ENCODE measurements at regions of chr15 and their contacts with region 1.

Region 1: GRCh38 chr15:65638681-65639089 is 16.9 kb downstream of the SLC24A1 start:
- DNase-seq: peak; percentile 84 to 96
- ATAC-seq: peak; percentile 74 to 87
- H3K4me3 ChIP-seq: no peak overlapping the region
- H3K27ac ChIP-seq: no peak overlapping the region
- H3K4me1 ChIP-seq: peaks cover 17% of the 10 kb centered on the region
- CTCF ChIP-seq: peak; percentile 97
- EP300 ChIP-seq: no peak
- POLR2A ChIP-seq: no peak
- RAD21 ChIP-seq: peak; percentile 88 to 96

Region 2: GRCh38 chr15:65426216-65426853 is 212.3 kb before region 1 on chr15:
- CTCF ChIA-PET with region 1: no interaction called
- POLR2A ChIA-PET with region 1: no interaction called
- DNase-seq: no peak
- ATAC-seq: no peak
- H3K4me3 ChIP-seq: no peak overlapping the region
- H3K27ac ChIP-seq: no peak overlapping the region
- H3K4me1 ChIP-seq: peaks cover 11% of the 10 kb centered on the region; the same call in 2 of the 3 replicates
- CTCF ChIP-seq: no peak
- EP300 ChIP-seq: no peak
- POLR2A ChIP-seq: no peak
- RAD21 ChIP-seq: no peak

Region 3: GRCh38 chr15:65620833-65621232 is 17.9 kb before region 1 on chr15:
- CTCF ChIA-PET with region 1: interaction called, 106 read pairs
- POLR2A ChIA-PET with region 1: no interaction called
- DNase-seq: no peak
- ATAC-seq: peak; percentile 33 to 57; a peak in 2 of 6 replicates
- H3K4me3 ChIP-seq: no peak overlapping the region
- H3K27ac ChIP-seq: no peak overlapping the region
- H3K4me1 ChIP-seq: no peaks in the 10 kb centered on the region
- CTCF ChIP-seq: no peak
- EP300 ChIP-seq: no peak
- POLR2A ChIP-seq: no peak
- RAD21 ChIP-seq: 0 out of 5 replicates have a peak, but pooled peaks of 1 of the 2 experiments have one; percentile 13

Region 4: GRCh38 chr15:65682404-65682911 is 43.8 kb after region 1 on chr15:
- CTCF ChIA-PET with region 1: interaction called, 15 read pairs
- POLR2A ChIA-PET with region 1: no interaction called
- DNase-seq: no peak
- ATAC-seq: no peak
- H3K4me3 ChIP-seq: no peak overlapping the region
- H3K27ac ChIP-seq: no peak overlapping the region
- H3K4me1 ChIP-seq: no peaks in the 10 kb centered on the region
- CTCF ChIP-seq: no peak
- EP300 ChIP-seq: no peak
- POLR2A ChIP-seq: no peak
- RAD21 ChIP-seq: no peak

Region 5: DNA sequence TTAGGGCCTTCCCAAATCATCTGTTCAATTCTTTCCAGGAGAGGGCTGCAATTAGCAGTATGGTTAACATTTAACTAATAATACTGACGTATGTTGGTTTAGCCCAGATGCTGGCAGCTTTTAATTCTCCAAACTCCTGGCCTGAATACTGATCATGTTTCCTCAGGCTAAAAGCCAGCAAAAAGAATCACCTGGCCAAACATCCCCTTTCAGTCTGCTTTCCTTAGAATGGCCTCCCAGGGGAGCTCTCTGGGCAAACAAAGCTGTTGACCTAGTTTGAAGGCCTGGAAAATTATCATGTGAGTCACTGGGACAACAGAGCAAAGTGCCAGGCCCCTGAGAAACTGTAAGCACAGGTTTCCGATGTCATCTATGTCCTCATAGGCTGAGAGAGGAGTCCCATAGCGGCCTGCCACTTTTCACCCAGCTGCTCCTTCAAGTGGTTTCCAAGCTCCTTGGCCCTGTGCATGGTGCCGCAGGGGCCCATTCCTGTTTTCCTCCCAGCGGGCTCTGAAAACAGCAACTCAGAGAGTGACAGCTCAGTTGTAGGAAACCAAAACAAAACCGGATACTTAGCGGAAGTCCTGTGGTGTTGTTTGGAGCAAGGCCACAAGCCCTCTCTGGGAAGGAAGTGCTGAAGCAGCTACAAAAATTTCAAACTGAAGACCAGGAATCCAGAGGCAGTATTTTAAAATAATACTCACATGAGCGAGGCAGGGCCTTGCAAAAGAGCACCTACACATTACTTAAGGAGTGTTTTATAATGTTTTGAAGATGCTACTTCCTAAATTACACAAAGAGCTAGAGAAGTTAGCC is 194.1 kb after region 1 on chr15:
- CTCF ChIA-PET with region 1: interaction called, 20 read pairs
- POLR2A ChIA-PET with region 1: no interaction called
- DNase-seq: peak; percentile 99
- ATAC-seq: peak; percentile 97
- H3K4me3 ChIP-seq: peak overlapping the region; percentile 9; the same call in 2 of the 3 replicates
- H3K27ac ChIP-seq: peak overlapping the region; percentile 59 to 74
- H3K4me1 ChIP-seq: peaks cover 48% of the 10 kb centered on the region
- CTCF ChIP-seq: peak; percentile 26; the same call in 2 of the 3 replicates
- EP300 ChIP-seq: peak; percentile 73 to 82; a peak in 3 of 5 replicates
- POLR2A ChIP-seq: no peak
- RAD21 ChIP-seq: peak; percentile 28 to 67; a peak in 4 of 5 replicates

Region 6: DNA sequence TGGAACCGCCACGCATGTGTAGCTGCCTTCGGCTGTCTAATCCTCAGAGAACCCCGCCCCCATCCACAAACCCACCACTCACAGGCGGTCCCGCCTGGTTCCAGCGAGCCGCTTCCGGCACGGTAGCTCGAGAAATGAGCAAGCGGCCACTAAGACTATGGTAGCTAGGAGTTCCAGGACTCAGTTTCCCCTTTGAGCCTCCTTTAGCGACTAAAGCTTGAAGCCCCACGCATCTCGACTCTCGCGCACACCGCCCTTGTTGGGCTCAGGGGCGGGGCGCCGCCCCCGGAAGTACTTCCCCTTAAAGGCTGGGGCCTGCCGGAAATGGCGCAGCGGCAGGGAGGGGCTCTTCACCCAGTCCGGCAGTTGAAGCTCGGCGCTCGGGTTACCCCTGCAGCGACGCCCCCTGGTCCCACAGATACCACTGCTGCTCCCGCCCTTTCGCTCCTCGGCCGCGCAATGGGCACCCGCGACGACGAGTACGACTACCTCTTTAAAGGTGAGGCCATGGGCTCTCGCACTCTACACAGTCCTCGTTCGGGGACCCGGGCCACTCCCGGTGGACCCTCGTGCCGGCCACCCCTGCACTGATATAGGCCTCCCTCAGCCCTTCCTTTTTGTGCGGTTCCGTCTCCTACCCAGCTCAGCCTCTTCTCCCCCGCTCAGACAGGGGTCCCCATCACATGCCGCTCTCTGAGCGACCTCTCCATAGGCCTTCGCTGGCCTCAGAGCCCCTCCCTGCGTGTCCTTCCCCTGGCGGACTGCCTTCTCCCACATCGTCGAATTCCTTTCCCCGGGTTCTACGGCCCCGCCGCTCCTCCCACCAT is 230.7 kb after region 1 on chr15 and contains the start of gene RAB11A:
- CTCF ChIA-PET with region 1: interaction called, 28 read pairs
- POLR2A ChIA-PET with region 1: interaction called, 16 read pairs
- DNase-seq: peak; percentile 96 to 99
- ATAC-seq: peak; percentile 93 to 96
- H3K4me3 ChIP-seq: peak within 1 kb of the TSS; percentile 86
- H3K27ac ChIP-seq: peak within 1 kb of the TSS; percentile 91 to 94
- H3K4me1 ChIP-seq: peaks cover 26% of the 10 kb centered on the region
- CTCF ChIP-seq: peak; percentile 35; the same call in 1 of the 3 replicates
- EP300 ChIP-seq: no peak
- POLR2A ChIP-seq: peak; percentile 91
- RAD21 ChIP-seq: peak; percentile 15 to 44; a peak in 3 of 5 replicates
- polyA plus RNA-seq, gene RAB11A: 527 and 551 TPM in 2 replicates